Activated CD8-positive, alpha-beta memory T cell treated with anti-CD3 and anti-CD28 coated beads, Interleukin-2, amount 10 ng/mL, durations not matched to agents 7 days and 5 days (primary cell): ENCODE measurements at regions of chr14 and their contacts with region 1.

Region 1: GRCh38 chr14:65847075-65847847 is 434.7 kb downstream of the FUT8 start:
- DNase-seq: peak; percentile 94
- ATAC-seq: peak; percentile 84
- H3K4me3 Mint-ChIP-seq: peak overlapping the region; percentile 62
- H3K27ac Mint-ChIP-seq: peak overlapping the region; percentile 96
- H3K4me1 Mint-ChIP-seq: peaks cover 72% of the 10 kb centered on the region
- H3K27me3 Mint-ChIP-seq: no peaks in the 10 kb centered on the region

Region 2: DNA sequence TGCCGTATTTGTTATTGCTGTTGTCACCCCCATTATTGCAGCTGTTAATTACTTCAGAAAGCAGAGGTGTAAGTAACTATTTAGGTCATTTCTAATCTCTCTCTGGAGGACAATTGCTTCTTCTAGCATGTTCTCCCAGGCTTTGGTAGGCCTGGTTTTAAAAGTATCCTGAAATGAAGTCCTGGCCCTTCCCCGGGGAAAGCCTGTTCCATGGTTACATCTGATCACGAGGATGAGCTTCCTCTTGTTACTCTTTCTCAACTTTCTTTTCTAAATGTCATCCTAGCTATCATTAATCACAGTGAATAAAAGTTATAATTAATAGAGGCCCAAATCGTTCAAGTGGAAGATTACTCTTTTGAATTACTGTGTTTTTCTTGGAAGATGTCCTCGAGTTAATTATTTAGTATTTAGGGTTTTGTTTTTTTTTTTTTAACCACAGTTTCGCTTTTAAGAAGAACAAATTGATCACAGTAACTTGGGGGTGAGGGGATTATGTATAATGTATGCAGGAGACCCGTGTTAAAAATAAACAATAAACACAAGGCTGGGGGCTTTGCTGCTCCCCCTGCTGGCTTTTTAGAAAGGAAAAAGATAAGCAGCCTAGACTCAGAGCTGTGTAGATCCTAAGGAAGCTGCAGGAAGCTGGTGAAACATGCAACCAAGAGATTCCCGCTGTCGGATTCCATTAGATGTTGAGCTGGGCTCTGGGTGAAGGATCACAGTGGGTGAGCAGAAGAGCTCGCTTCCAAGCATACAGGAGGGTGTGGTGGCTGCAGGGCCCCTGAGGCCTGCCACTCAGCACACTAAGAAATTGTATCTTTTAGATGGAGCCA is 14.6 kb before region 1 on chr14:
- CTCF ChIA-PET with region 1: interaction called, 10 read pairs
- DNase-seq: no peak
- ATAC-seq: peak; percentile 9
- H3K4me3 Mint-ChIP-seq: no peak overlapping the region
- H3K27ac Mint-ChIP-seq: peak overlapping the region; percentile 34
- H3K4me1 Mint-ChIP-seq: peaks cover 17% of the 10 kb centered on the region
- H3K27me3 Mint-ChIP-seq: peaks cover 2% of the 10 kb centered on the region

Region 3: DNA sequence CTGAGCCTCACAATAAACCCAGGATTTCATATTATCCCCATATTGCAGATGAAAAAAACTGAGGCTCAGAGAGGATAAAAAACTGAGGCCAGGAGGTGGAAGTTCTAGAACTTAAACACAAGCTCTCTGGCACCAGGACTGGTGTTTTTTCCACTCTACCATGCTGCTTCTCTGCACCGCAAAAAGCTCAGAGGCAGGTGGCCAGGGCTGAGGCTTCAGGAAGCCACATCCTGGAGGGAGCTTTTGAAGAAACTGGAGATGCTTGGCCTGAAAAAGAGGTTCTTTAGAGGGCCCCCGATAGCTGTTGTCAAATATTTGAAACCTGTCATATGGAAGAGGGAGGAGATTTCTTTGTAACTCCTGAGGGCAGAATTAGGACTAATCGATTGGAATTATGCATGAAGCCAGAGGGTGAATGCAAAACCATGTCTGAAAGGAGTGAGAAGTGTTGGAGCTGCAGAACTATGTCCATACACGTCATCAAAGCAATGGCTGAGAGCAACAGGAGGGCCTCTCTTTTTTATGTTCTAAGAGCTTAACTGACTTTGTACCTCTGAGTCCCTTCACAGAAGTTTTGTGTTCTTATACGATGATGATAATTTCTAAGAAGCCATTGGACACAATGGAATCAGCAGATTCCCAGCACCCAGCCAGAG is 13.8 kb after region 1 on chr14:
- CTCF ChIA-PET with region 1: interaction called, 11 read pairs
- DNase-seq: peak; percentile 83
- ATAC-seq: peak; percentile 80
- H3K4me3 Mint-ChIP-seq: no peak overlapping the region
- H3K27ac Mint-ChIP-seq: peak overlapping the region; percentile 70
- H3K4me1 Mint-ChIP-seq: peaks cover 53% of the 10 kb centered on the region
- H3K27me3 Mint-ChIP-seq: no peaks in the 10 kb centered on the region

Region 4: DNA sequence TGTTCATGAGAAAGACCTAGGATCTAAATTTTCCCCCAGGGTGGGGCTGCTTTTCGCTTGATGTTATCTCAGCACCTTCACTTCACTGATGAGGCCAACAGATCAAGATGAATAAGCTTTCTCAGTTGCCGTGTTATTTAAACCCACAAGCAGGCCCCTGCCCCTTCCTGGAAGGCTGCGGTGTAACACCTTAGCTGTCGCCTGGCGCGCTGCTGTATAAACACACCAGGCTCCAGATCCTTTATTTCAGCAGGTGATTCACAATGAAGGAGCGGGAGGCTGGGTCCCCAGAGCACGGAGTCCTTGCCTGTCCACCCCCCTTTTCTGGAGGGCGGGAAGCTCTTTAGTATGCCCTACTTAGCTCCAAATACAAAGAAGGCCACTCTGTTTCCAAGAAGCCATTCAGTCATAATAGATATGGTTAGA is 80.7 kb after region 1 on chr14:
- CTCF ChIA-PET with region 1: interaction called, 10 read pairs
- DNase-seq: peak; percentile 95
- ATAC-seq: peak; percentile 95
- H3K4me3 Mint-ChIP-seq: peak overlapping the region; percentile 27
- H3K27ac Mint-ChIP-seq: peak overlapping the region; percentile 94
- H3K4me1 Mint-ChIP-seq: peaks cover 57% of the 10 kb centered on the region
- H3K27me3 Mint-ChIP-seq: no peaks in the 10 kb centered on the region

Region 5: DNA sequence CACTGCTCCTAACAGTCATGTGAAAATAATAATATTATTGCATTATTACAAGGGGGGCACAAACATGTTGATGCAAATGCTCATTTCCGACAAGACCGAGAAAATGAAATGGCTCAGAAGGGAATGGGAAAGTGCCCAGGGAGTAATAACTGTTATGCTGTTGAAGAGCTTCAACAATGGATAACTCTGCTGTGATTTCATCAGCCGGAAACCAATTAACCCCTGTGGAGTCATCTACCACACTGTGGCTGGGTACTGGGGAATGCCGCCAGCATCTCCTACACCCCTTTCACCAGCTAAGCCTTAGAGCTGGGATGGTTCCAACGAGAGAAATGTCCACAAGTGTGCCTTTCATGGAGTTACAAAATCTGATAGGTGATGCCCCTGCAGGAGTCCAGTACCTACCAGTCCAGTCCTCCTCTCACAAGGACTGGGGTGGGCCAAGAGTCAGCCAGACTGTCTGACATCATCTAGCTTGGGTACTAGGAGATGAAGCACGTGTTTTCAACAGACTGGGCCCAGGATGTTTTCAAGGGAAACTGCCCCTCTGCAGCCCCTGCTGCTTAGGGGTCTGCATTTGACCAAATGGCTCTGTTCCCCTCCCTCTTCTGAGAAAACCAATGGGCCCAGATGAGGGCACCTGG is 129.6 kb after region 1 on chr14:
- CTCF ChIA-PET with region 1: no interaction called
- DNase-seq: no peak
- ATAC-seq: no peak
- H3K4me3 Mint-ChIP-seq: no peak overlapping the region
- H3K27ac Mint-ChIP-seq: no peak overlapping the region
- H3K4me1 Mint-ChIP-seq: no peaks in the 10 kb centered on the region
- H3K27me3 Mint-ChIP-seq: peaks cover 4% of the 10 kb centered on the region